Gastrocnemius medialis (tissue), 4 donors: ENCODE measurements at regions of chr10 and their contacts with region 1.

Region 1: DNA sequence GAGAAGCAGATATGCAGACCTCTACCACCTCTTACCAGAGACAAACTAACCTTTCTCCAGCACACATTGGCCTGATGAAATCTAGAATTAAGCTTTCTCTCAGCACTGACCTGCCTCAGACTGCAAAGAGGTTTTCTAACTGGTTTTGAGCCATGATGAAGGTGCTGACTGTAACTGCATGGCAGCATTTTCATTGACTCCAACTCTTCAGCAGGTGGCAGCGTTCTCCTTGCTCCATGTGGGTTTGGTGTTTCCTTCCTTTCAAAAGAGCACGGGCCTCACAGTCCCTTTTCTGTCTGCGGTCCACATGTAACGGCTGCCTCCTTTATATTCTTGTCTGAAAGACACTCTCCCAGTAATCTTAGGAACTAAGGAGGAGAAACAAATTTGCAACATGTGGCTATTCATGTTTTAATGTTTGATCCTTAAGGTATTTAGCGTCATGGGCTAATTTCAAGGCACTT is 12.6 kb downstream of the KLLN start:
- DNase-seq: peak; percentile 60 to 67
- ATAC-seq: peak; percentile 98 to 100
- H3K4me3 ChIP-seq: no peak overlapping the region
- H3K27ac ChIP-seq: peak overlapping the region in 2 of 4 donors; percentile 27
- H3K4me1 ChIP-seq: peaks cover 0 to 3% of the 10 kb centered on the region in 2 donors
- H3K27me3 ChIP-seq: no peaks in the 10 kb centered on the region
- CTCF ChIP-seq: peak; percentile 49 to 84 (median 66)
- POLR2A ChIP-seq: no peak

Region 2: GRCh38 chr10:87935290-87936141 is 84.7 kb after region 1 on chr10:
- in situ Hi-C with region 1: no loop called
- intact Hi-C with region 1: no loop called
- DNase-seq: no peak
- ATAC-seq: no peak
- H3K4me3 ChIP-seq: no peak overlapping the region
- H3K27ac ChIP-seq: peak overlapping the region in 1 of 4 donors; percentile 10
- H3K4me1 ChIP-seq: peaks cover 32 to 35% of the 10 kb centered on the region in 2 donors
- H3K27me3 ChIP-seq: no peaks in the 10 kb centered on the region
- CTCF ChIP-seq: no peak
- POLR2A ChIP-seq: no peak

Region 3: GRCh38 chr10:88114368-88114767 is 263.6 kb after region 1 on chr10:
- in situ Hi-C with region 1: loop called in 2 of 4 experiments (anchors 10 to 25 kb)
- intact Hi-C with region 1: no loop called
- DNase-seq: peak in 1 of 2 donors; percentile 40
- ATAC-seq: peak in 1 of 2 donors; percentile 45
- H3K4me3 ChIP-seq: no peak overlapping the region
- H3K27ac ChIP-seq: no peak overlapping the region
- H3K4me1 ChIP-seq: peaks cover 0 to 4% of the 10 kb centered on the region in 2 donors
- H3K27me3 ChIP-seq: no peaks in the 10 kb centered on the region
- CTCF ChIP-seq: peak; percentile 21 to 62 (median 47)
- POLR2A ChIP-seq: no peak

Region 4: DNA sequence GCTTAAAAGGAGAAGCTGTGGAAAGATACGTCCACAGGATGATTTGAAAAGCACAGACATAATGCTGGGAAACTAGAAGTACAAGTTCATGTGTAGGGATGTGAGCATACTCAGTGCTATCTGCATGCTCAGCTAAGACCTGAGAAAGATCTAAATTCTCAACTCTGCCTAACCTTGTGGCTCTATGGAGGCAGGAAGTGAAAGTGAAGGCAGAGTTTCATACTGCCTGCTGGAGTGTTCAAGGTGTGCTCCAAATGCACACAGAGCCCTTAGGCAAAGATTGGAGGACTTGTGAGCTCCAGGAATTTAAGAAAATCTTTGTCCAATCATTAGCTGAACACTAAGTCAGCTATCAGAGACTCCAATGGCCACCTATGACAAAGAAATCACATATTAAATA is 541.4 kb after region 1 on chr10:
- in situ Hi-C with region 1: loop called in 3 of 4 experiments (anchors 5 to 10 kb)
- intact Hi-C with region 1: no loop called
- DNase-seq: no peak
- ATAC-seq: no peak
- H3K4me3 ChIP-seq: no peak overlapping the region
- H3K27ac ChIP-seq: no peak overlapping the region
- H3K4me1 ChIP-seq: peaks cover 4 to 6% of the 10 kb centered on the region in 2 donors
- H3K27me3 ChIP-seq: no peaks in the 10 kb centered on the region
- CTCF ChIP-seq: no peak
- POLR2A ChIP-seq: no peak

Region 5: GRCh38 chr10:88541116-88541626 is 690.4 kb after region 1 on chr10:
- in situ Hi-C with region 1: loop called in 1 of 4 experiments (anchors 10 kb)
- intact Hi-C with region 1: no loop called
- DNase-seq: no peak
- ATAC-seq: peak; percentile 59 to 72
- H3K4me3 ChIP-seq: no peak overlapping the region
- H3K27ac ChIP-seq: peak overlapping the region; percentile 51 to 79 (median 64)
- H3K4me1 ChIP-seq: peaks cover 0 to 16% of the 10 kb centered on the region in 2 donors
- H3K27me3 ChIP-seq: no peaks in the 10 kb centered on the region
- CTCF ChIP-seq: no peak
- POLR2A ChIP-seq: no peak